A673 (cell line): ENCODE measurements at regions of chr6 and their contacts with region 1.

Region 1: DNA sequence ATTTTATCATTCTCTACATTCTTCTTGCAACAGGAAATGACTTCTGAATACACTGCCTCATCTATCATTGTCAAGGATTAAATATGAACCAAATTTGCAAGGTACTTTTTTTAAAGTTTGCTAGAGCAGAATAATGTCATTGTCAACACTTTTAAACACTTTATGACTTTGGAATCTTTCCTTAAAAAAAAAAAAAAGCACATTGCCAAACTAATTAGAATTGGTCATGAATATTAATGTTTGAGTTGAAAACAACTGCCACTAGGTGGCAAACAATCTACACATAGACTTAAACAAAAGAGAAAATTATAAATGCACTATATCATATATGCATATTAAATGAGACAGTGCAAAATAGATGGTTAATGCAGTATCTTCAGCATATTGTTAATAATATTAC is 32.5 kb upstream of the TMEM244 start:
- DNase-seq: peak; percentile 70
- H3K4me3 ChIP-seq: no peak overlapping the region
- H3K27ac ChIP-seq: peak overlapping the region; percentile 48
- H3K4me1 ChIP-seq: peaks cover 47% of the 10 kb centered on the region
- H3K27me3 ChIP-seq: no peaks in the 10 kb centered on the region
- CTCF ChIP-seq: peak; percentile 71

Region 2: DNA sequence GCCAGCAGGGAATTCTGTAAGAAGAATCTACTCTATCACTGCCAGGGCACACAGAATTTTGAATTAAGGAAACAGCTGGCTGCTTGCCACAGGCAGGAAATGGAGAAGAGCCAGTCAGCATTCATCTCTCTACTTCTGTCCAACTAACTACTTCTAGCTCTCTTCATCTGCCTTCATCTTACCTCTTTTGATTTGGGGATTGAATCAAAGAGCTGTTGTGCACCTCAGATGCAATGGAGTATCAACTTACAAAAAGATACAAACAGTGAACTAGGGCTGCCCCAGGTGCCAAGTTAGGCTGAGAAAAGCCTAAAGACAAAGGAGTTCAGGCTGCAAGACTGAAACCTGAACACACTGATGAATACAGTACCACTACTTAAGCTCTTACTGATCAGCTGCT is 1455.2 kb before region 1 on chr6:
- CTCF ChIA-PET with region 1: no interaction called
- POLR2A ChIA-PET with region 1: no interaction called
- intact Hi-C with region 1: loop called (anchors 10 kb)
- DNase-seq: peak; percentile 88
- H3K4me3 ChIP-seq: peak overlapping the region; percentile 27
- H3K27ac ChIP-seq: peak overlapping the region; percentile 68
- H3K4me1 ChIP-seq: peaks cover 55% of the 10 kb centered on the region
- H3K27me3 ChIP-seq: no peaks in the 10 kb centered on the region
- CTCF ChIP-seq: no peak

Region 3: DNA sequence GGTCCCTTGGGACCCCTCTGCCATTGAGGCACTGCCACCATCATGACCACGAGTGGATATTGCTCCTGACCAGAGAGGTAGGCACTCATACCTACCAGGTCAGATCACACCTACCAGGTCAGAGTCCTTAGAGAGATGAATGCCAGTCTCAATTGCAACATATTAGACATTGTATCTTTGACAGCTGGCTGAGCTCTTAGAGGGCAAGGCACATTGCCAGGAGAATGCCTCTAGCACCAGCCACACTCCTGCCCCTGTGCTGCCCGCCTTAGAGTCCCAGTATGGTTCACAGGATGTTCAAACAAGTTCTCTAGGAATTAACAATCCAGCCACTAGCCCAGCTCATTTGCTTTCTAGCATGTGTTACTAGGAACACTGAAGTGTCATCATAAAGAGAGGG is 98.4 kb before region 1 on chr6:
- CTCF ChIA-PET with region 1: no interaction called
- POLR2A ChIA-PET with region 1: no interaction called
- intact Hi-C with region 1: no loop called
- DNase-seq: no peak
- H3K4me3 ChIP-seq: no peak overlapping the region
- H3K27ac ChIP-seq: no peak overlapping the region
- H3K4me1 ChIP-seq: no peaks in the 10 kb centered on the region
- H3K27me3 ChIP-seq: no peaks in the 10 kb centered on the region
- CTCF ChIP-seq: no peak

Region 4: DNA sequence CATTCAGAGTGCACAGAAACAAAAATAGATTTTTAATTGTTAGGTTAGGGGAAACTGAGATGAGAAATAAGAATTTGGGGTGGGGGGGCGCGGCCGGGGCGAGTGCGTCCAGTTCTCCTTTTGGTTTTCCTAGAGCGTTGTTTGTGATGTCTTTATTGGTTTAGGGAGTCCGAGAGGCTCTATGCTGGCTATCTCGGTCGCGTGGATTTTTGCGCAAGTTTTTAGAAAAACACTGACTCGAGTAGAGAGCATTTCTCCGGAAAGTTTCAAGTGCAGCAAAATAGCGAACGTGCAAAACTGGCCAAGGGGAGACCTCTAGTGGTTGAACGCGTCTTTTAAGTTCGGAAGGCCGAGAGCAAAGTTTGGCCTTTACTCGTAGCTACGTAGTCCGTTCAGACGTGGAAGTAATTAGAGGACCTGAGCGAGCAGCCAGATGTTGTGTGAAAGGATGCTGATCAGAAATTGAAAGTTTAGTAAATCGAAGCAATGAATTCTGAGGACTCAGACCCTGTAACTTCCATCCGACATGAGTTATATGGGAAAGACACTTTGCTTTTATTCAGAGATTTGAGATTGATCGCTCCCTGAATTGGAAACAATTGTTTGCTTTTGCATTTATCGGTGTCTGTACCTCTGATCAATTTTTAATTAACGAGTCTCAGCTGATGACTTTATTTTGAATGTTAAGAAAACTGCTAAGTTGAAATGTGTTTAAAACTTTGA is 127.4 kb after region 1 on chr6:
- CTCF ChIA-PET with region 1: no interaction called
- POLR2A ChIA-PET with region 1: no interaction called
- intact Hi-C with region 1: loop called (anchors 5 kb)
- DNase-seq: peak; percentile 93
- H3K4me3 ChIP-seq: peak overlapping the region; percentile 72
- H3K27ac ChIP-seq: peak overlapping the region; percentile 71
- H3K4me1 ChIP-seq: peaks cover 13% of the 10 kb centered on the region
- H3K27me3 ChIP-seq: no peaks in the 10 kb centered on the region
- CTCF ChIP-seq: peak; percentile 89

Region 5: GRCh38 chr6:130693944-130694343 is 800.3 kb after region 1 on chr6:
- CTCF ChIA-PET with region 1: no interaction called
- POLR2A ChIA-PET with region 1: no interaction called
- intact Hi-C with region 1: no loop called
- DNase-seq: no peak
- H3K4me3 ChIP-seq: no peak overlapping the region
- H3K27ac ChIP-seq: no peak overlapping the region
- H3K4me1 ChIP-seq: no peaks in the 10 kb centered on the region
- H3K27me3 ChIP-seq: no peaks in the 10 kb centered on the region
- CTCF ChIP-seq: no peak